Activated B cell treated with CpG ODN at 0.5 μM for 24 hours (primary cell): ENCODE measurements at regions of chr1 and their contacts with region 1.

Region 1: DNA sequence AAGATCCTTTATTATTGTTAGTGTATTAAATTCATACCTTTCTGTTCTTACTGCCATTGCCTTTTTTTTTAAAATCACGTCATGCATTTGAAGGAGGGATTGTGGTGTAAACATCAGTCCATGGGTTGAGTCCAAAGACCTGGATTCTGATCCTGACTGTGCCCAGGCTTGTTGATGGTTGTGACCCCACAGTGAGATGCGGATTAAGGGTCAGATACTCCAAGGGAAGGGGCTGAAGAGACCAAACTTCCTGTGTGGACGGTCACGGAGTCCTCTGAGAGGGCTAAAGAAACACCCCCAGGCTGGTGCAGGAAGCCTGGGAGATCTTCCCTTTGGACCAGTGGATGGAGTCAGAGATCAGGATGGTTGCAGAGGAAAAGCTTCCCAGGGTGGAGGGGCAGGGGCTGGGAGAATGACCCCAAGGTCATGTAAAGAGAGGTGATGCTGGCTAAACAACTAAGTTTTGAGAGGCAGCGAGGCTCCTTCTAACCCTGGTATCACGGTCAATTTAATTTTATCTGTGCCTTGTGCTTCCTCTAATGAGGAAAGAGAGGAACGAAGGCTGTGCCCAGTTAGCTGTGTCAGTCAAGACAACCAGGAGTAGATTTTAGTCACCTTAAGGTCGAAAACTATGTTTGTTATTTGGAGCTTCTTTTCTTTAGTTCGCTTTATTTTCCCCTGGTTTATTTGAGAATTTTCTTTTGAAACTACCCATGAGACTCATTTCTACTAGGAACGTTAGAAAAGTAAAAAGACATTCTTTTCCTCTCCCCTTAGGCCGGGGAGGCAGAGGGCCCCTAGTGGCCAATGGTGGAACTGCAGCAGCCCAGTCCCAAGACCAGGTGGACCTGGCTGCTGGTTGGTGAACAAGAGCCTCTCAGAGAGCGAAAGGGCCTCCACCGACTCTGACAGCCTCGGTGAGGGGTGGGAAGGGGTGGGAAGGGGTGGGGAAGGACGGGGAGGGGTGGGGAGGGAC is 8.7 kb upstream of the GPR161 start:
- DNase-seq: peak; percentile 80
- ATAC-seq: peak; percentile 100
- H3K4me3 Mint-ChIP-seq: peak overlapping the region; percentile 32
- H3K27ac Mint-ChIP-seq: peak overlapping the region; percentile 53
- H3K4me1 Mint-ChIP-seq: peaks cover 14% of the 10 kb centered on the region
- H3K27me3 Mint-ChIP-seq: no peaks in the 10 kb centered on the region
- CTCF ChIP-seq: peak; percentile 91

Region 2: GRCh38 chr1:168225476-168226190 is 80.2 kb after region 1 on chr1 and contains the start of gene SFT2D2:
- CTCF ChIA-PET with region 1: no interaction called
- POLR2A ChIA-PET with region 1: no interaction called
- intact Hi-C with region 1: loop called (anchors 2 kb)
- DNase-seq: peak; percentile 85
- ATAC-seq: peak; percentile 92
- H3K4me3 Mint-ChIP-seq: peak within 1 kb of the TSS; percentile 96
- H3K27ac Mint-ChIP-seq: peak within 1 kb of the TSS; percentile 93
- H3K4me1 Mint-ChIP-seq: peaks cover 47% of the 10 kb centered on the region
- H3K27me3 Mint-ChIP-seq: no peaks in the 10 kb centered on the region
- CTCF ChIP-seq: no peak
- total RNA-seq, gene SFT2D2: 62.7 and 63.4 TPM in 2 replicates